ENCODE measurements at regions of chr11 and their contacts with region 1.

Region 1: DNA sequence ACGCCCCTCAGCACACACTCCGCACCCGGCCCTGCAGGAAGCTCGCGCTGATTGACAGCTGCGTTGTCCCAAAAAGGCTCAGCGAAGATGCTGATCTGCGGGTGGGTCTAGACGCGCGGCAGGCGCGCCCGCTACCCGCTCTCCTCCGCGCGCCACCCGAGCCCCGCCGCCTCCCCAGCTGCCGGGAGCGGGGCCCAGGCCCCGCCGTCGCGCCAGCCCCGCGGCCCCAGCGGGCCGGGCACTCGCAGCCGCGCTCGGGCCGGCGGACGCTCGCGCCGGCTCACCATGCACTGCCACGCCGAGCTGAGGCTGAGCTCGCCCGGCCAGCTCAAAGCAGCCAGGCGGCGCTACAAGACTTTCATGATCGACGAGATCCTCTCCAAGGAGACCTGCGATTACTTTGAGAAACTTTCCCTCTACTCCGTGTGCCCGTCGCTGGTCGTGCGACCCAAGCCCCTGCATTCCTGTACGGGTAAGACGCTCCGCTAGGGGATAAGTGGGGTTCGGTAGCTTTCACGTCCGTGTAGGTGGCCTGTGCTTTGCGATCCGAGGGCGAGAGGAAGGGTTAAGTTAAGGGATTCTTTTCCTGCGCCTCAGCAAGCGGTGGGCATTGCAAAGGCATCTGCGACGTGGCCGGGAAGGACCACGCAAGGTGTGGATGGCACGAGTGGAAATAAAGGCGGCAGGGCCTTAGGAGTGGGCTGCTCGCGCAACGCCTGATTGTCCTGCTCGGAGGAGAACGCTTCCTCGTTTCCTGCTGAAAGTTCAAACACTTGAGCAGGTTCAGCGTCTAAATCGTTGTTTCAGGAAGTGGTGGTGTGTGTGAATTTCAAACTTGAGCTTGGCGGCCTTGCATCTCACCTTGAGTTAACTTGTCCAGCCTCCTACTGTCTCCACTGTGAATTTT is at the start of gene BARX2:
- H3K4me3 ChIP-seq: peak within 1 kb of the TSS; percentile 55
- H3K27ac ChIP-seq: peak within 1 kb of the TSS; percentile 93
- H3K4me1 ChIP-seq: peaks cover 8% of the 10 kb centered on the region
- CTCF ChIP-seq: peak; percentile 75

Region 2: DNA sequence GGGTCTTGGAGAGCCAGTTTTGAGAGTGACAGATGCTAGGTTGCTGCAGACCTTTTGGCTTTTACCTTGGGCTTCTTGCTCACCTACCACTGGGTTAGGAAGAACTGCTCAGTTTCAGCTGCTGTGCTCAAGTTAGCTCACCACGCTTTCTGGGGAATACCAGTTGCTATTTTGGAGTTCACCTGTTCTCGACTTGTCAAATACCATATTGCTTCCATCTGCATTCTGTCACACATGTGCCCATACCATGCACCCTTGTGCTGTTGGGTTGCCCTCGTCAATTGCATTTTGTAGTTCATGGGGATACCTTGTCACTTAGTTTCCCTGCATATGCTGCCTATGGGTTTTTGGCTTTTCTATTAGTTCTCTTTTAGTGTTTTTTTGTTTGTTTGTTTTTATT is 23.3 kb before region 1 on chr11:
- CTCF ChIA-PET with region 1: no interaction called
- POLR2A ChIA-PET with region 1: no interaction called
- H3K4me3 ChIP-seq: no peak overlapping the region
- H3K27ac ChIP-seq: no peak overlapping the region
- H3K4me1 ChIP-seq: no peaks in the 10 kb centered on the region
- CTCF ChIP-seq: no peak

Region 3: GRCh38 chr11:129364143-129364654 is 11.8 kb before region 1 on chr11:
- CTCF ChIA-PET with region 1: interaction called, 28 read pairs
- POLR2A ChIA-PET with region 1: interaction called, 4 read pairs
- H3K4me3 ChIP-seq: no peak overlapping the region
- H3K27ac ChIP-seq: no peak overlapping the region
- H3K4me1 ChIP-seq: peaks cover 8% of the 10 kb centered on the region; the same call in 1 of the 2 replicates
- CTCF ChIP-seq: peak; percentile 98

Region 4: GRCh38 chr11:129402206-129402605 is 26.2 kb after region 1 on chr11:
- CTCF ChIA-PET with region 1: no interaction called
- POLR2A ChIA-PET with region 1: no interaction called
- H3K4me3 ChIP-seq: no peak overlapping the region
- H3K27ac ChIP-seq: no peak overlapping the region
- H3K4me1 ChIP-seq: no peaks in the 10 kb centered on the region
- CTCF ChIP-seq: no peak

Region 5: DNA sequence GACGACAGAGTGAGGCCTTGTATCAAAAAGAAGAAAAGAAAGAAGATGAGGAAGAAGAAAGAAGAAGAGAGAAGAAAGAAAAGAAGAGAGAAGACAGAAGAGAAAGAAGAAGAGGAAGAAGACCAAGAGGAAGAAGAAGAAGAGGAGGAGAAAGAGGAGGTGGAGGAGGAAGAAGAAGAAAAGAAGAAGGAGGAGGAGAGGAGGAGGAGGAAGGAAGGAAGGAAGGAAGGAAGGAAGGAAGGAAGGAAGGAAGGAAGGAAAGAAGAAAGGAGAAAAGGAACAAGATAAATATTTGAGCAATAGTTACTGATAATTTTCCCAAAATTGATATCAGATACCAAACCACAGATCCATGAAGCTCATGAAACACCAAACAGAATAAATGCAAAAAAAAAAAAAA is 269.9 kb after region 1 on chr11:
- CTCF ChIA-PET with region 1: no interaction called
- POLR2A ChIA-PET with region 1: no interaction called
- H3K4me3 ChIP-seq: no peak overlapping the region
- H3K27ac ChIP-seq: no peak overlapping the region
- H3K4me1 ChIP-seq: no peaks in the 10 kb centered on the region
- CTCF ChIP-seq: no peak